Activated naive CD4-positive, alpha-beta T cell treated with anti-CD3 and anti-CD28 coated beads for 36 hours (primary cell): ENCODE measurements at regions of chr5 and their contacts with region 1.

Region 1: DNA sequence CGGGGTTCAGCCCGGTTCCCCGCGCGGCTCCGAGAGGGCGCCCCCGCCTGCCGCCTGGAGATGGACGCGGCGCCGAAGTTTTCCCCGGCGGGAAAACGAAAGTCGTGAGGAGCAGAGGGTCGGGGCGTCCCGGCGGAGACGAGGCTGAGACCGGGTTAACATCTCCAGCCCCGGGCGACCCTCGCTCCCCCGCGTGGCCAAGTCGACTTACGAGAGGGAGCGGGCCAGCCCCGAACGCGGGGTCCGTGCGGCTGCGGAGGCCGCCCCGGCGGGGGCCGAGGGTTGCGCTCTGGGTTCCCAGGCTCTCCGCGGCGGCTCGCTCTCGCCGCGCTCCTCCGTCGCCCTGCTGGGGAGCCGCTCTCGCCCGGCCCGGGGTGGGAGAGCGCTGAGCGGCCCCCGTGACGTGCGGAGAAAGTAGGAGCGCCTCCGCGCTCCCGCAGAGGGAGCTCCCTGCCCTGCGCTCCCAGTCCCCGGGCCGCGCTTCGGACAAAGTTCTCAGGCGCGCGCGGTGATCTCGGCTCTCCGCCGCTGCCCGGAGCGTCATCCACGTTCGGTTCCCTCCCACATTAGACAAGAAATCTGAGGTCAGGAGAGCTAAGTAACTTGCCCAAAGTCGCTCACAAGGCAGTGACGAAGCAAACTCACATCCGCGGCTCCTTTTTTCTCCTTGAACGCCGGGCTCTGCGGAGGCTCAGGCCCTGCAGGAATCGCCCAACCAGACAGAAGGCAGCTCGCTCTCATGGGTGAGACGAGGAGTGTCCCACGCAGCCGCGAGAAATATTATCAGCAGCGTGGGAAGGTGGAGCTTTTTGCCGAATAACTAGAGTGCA is 1.2 kb upstream of the GCNT4 start:
- DNase-seq: peak; percentile 67
- H3K4me3 Mint-ChIP-seq: peak overlapping the region; percentile 86
- H3K27ac Mint-ChIP-seq: peak overlapping the region; percentile 92
- H3K4me1 Mint-ChIP-seq: peaks cover 73% of the 10 kb centered on the region
- H3K27me3 Mint-ChIP-seq: no peaks in the 10 kb centered on the region

Region 2: DNA sequence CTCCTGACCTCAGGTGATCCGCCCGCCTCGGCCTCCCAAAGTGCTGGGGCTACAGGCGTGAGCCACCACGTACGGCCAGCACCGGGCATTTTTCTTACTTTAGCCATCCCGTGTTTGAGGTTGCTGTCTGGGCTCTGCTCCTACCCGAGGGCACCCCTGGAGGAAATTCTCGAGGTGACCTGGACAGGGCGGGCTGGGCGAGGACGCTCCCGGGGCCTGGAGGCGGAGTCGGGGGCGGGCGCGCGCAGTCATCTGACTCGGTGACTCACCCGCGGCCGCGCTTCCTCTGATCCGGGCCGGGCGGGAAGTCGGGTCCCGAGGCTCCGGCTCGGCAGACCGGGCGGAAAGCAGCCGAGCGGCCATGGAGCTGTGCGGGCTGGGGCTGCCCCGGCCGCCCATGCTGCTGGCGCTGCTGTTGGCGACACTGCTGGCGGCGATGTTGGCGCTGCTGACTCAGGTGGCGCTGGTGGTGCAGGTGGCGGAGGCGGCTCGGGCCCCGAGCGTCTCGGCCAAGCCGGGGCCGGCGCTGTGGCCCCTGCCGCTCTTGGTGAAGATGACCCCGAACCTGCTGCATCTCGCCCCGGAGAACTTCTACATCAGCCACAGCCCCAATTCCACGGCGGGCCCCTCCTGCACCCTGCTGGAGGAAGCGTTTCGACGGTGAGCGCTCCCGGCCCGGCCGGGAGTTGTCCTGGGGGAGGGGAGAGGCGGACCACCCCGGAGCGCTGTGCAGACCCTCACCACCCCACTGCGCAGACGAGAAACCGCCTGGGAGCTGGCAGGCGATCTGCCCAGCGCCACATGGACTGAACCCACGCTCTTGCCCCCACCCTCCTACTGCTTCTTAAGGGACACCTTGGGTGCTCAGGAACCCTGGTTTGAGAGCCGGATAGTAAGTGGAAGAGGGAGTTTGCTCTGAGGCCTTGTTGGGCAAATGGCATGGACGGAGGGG is 368.3 kb before region 1 on chr5 and contains the start of gene HEXB:
- CTCF ChIA-PET with region 1: no interaction called
- intact Hi-C with region 1: loop called (anchors 5 kb)
- DNase-seq: peak; percentile 92
- H3K4me3 Mint-ChIP-seq: peak within 1 kb of the TSS; percentile 71
- H3K27ac Mint-ChIP-seq: peak within 1 kb of the TSS; percentile 6
- H3K4me1 Mint-ChIP-seq: peaks cover 23% of the 10 kb centered on the region
- H3K27me3 Mint-ChIP-seq: no peaks in the 10 kb centered on the region
- total RNA-seq, gene HEXB: 65.6 to 70.0 TPM

Region 3: DNA sequence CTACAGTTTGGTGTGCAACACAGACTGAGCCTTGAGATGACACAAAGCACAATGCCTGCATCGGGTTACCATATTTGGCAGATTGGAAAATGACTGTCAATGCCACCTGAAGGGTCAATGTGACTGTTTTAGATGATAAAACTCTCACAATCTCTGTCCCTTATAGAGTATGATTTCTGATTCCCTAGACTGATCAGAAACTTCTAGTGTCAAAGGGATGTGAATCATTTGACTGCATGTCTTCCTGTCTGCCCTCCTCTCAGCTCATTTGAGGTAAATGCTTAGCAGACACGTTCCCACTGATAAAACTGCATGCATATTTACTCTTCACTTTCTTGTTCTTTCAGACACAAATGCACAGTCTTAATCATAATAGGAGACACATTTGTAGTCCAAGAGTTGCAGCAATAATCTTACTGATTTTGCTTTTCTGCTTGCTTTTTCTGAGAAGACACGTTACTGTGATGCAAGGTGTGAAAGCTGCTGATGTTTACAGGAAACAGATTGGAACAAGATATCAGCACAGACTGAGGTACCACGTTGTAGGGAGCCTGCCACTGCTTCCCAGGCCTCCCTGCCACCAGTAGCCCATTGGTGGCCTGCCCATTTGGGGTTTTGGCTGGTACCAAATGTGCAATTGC is 78.9 kb before region 1 on chr5:
- CTCF ChIA-PET with region 1: interaction called, 3 read pairs
- intact Hi-C with region 1: loop called (anchors 1 kb)
- DNase-seq: peak; percentile 55
- H3K4me3 Mint-ChIP-seq: no peak overlapping the region
- H3K27ac Mint-ChIP-seq: peak overlapping the region; percentile 83
- H3K4me1 Mint-ChIP-seq: peaks cover 25% of the 10 kb centered on the region
- H3K27me3 Mint-ChIP-seq: no peaks in the 10 kb centered on the region

Region 4: GRCh38 chr5:75108931-75109596 is 55.5 kb after region 1 on chr5:
- CTCF ChIA-PET with region 1: interaction called, 4 read pairs
- intact Hi-C with region 1: loop called (anchors 5 kb)
- DNase-seq: no peak
- H3K4me3 Mint-ChIP-seq: no peak overlapping the region
- H3K27ac Mint-ChIP-seq: no peak overlapping the region
- H3K4me1 Mint-ChIP-seq: peaks cover 25% of the 10 kb centered on the region
- H3K27me3 Mint-ChIP-seq: no peaks in the 10 kb centered on the region

Region 5: DNA sequence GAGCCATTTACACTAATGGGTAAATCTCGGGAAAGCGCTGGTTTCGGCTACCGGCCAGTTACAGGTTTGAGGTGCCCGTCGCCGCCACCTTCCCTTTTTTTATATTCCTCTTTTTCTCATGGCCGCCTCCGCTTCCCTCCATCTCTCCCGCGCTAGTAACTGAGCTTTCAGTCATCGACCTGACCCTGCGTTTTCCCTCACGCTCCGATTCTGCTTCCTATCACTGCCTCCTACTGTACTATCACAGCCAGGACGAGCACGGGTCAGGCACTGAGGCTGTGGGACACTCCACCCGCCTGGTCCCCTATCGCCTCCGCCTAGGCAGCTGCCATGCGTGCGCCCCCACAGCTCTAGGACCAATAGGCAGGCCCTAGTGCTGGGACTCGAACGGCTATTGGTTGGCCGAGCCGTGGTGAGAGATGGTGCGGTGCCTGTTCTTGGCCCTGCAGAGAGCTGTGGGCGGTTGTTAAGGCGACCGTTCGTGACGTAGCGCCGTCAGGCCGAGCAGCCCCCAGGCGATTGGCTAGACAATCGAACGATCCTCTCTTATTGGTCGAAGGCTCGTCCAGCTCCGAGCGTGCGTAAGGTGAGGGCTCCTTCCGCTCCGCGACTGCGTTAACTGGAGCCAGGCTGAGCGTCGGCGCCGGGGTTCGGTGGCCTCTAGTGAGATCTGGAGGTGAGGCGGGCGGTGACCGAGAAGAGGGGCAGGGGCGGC is 283.3 kb after region 1 on chr5 and contains the start of gene HMGCR:
- CTCF ChIA-PET with region 1: interaction called, 7 read pairs
- intact Hi-C with region 1: loop called (anchors 1 kb)
- DNase-seq: peak; percentile 99
- H3K4me3 Mint-ChIP-seq: no peak within 1 kb of the TSS
- H3K27ac Mint-ChIP-seq: no peak within 1 kb of the TSS
- H3K4me1 Mint-ChIP-seq: peaks cover 35% of the 10 kb centered on the region
- H3K27me3 Mint-ChIP-seq: no peaks in the 10 kb centered on the region
- total RNA-seq, gene HMGCR: 61.7 to 67.5 TPM

Region 6: GRCh38 chr5:75717082-75717922 is 663.8 kb after region 1 on chr5 and contains the start of gene POC5:
- CTCF ChIA-PET with region 1: no interaction called
- intact Hi-C with region 1: loop called (anchors 1 kb)
- DNase-seq: peak; percentile 98
- H3K4me3 Mint-ChIP-seq: peak within 1 kb of the TSS; percentile 99
- H3K27ac Mint-ChIP-seq: peak within 1 kb of the TSS; percentile 99
- H3K4me1 Mint-ChIP-seq: peaks cover 30% of the 10 kb centered on the region
- H3K27me3 Mint-ChIP-seq: no peaks in the 10 kb centered on the region
- total RNA-seq, gene POC5: 17.5 to 17.7 TPM

Region 7: GRCh38 chr5:76544268-76544926 is 1490.9 kb after region 1 on chr5:
- CTCF ChIA-PET with region 1: no interaction called
- intact Hi-C with region 1: loop called (anchors 5 kb)
- DNase-seq: peak; percentile 84
- H3K4me3 Mint-ChIP-seq: peak overlapping the region; percentile 71
- H3K27ac Mint-ChIP-seq: peak overlapping the region; percentile 97
- H3K4me1 Mint-ChIP-seq: peaks cover 86% of the 10 kb centered on the region
- H3K27me3 Mint-ChIP-seq: no peaks in the 10 kb centered on the region